Caco-2 (cell line): ENCODE measurements at regions of chr4 and their contacts with region 1.

Region 1: GRCh38 chr4:69896530-69897116 is 34.2 kb upstream of the CSN1S1 start:
- DNase-seq: no peak
- H3K4me3 ChIP-seq: no peak overlapping the region
- H3K4me3 Mint-ChIP-seq: no peak overlapping the region
- H3K27ac Mint-ChIP-seq: no peak overlapping the region
- H3K4me1 ChIP-seq: peaks cover 14% of the 10 kb centered on the region
- H3K4me1 Mint-ChIP-seq: peaks cover 13% of the 10 kb centered on the region
- H3K27me3 ChIP-seq: no peaks in the 10 kb centered on the region
- H3K27me3 Mint-ChIP-seq: no peaks in the 10 kb centered on the region
- CTCF ChIP-seq: peak; percentile 41 to 50

Region 2: DNA sequence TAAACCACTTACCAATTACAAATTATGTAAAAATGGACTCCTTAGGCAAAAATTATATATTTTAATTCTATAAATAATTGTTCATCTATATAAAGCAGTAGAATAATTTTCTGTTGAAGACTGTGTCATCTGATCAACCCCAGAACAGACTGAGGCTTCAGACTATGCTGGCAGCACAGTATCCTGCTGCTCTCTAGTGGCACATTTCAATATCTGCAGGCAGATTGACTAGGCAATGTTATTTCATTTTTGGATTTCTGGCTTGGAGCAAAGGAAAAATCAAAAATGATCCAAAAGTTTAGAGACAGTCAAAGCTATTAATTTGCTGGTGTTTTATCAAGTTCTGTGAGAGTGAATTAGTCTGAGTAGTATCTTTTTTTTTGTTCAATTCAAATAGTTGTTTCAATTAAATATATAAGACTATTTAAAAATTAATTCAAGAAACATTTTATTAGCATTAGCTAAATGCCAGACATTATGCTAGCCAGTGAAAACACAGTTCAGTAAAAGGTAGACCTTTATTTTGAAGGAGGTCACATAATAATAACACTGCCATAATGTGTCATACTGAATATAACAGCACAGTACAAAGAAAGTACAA is 15.3 kb before region 1 on chr4:
- CTCF ChIA-PET with region 1: no interaction called
- POLR2A ChIA-PET with region 1: no interaction called
- intact Hi-C with region 1: no loop called
- DNase-seq: peak; percentile 41 to 48
- H3K4me3 ChIP-seq: no peak overlapping the region
- H3K4me3 Mint-ChIP-seq: no peak overlapping the region
- H3K27ac Mint-ChIP-seq: no peak overlapping the region
- H3K4me1 ChIP-seq: no peaks in the 10 kb centered on the region; the same call in 1 of the 2 replicates
- H3K4me1 Mint-ChIP-seq: peaks cover 13% of the 10 kb centered on the region
- H3K27me3 ChIP-seq: no peaks in the 10 kb centered on the region
- H3K27me3 Mint-ChIP-seq: no peaks in the 10 kb centered on the region
- CTCF ChIP-seq: peak; percentile 75 to 80

Region 3: GRCh38 chr4:69934150-69934549 is 37.5 kb after region 1 on chr4:
- CTCF ChIA-PET with region 1: no interaction called
- POLR2A ChIA-PET with region 1: no interaction called
- intact Hi-C with region 1: no loop called
- DNase-seq: no peak
- H3K4me3 ChIP-seq: no peak overlapping the region
- H3K4me3 Mint-ChIP-seq: no peak overlapping the region
- H3K27ac Mint-ChIP-seq: no peak overlapping the region
- H3K4me1 ChIP-seq: no peaks in the 10 kb centered on the region
- H3K4me1 Mint-ChIP-seq: no peaks in the 10 kb centered on the region
- H3K27me3 ChIP-seq: no peaks in the 10 kb centered on the region
- H3K27me3 Mint-ChIP-seq: no peaks in the 10 kb centered on the region
- CTCF ChIP-seq: no peak

Region 4: DNA sequence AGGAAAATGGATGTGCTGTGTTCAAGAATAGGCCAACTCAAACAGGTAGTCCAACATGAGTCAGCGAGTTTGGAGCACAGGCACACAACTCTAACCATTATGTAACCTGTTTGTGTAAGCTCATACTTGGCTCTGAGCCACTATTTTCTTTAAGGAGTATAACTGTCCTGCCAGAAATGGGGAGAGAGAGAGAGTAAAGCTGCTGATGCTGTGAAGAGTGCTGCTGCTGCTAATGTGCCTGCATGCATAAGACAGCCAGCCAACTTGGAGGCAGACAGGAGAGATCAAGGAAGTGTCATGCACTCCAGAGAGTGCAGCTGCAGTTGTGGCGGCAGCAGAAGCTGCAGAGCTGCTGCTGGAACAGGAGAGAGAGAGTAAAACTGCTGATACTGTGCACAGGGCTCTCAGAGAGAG is 87.4 kb after region 1 on chr4:
- CTCF ChIA-PET with region 1: no interaction called
- POLR2A ChIA-PET with region 1: no interaction called
- intact Hi-C with region 1: loop called (anchors 5 kb)
- DNase-seq: peak; percentile 33 to 59
- H3K4me3 ChIP-seq: no peak overlapping the region
- H3K4me3 Mint-ChIP-seq: peak overlapping the region; percentile 28
- H3K27ac Mint-ChIP-seq: peak overlapping the region; percentile 54
- H3K4me1 ChIP-seq: peaks cover 25% of the 10 kb centered on the region
- H3K4me1 Mint-ChIP-seq: peaks cover 20% of the 10 kb centered on the region
- H3K27me3 ChIP-seq: no peaks in the 10 kb centered on the region
- H3K27me3 Mint-ChIP-seq: no peaks in the 10 kb centered on the region
- CTCF ChIP-seq: no peak

Region 5: GRCh38 chr4:70269674-70270073 is 373.1 kb after region 1 on chr4:
- CTCF ChIA-PET with region 1: interaction called, 3 read pairs
- POLR2A ChIA-PET with region 1: no interaction called
- intact Hi-C with region 1: loop called (anchors 1 kb)
- DNase-seq: peak in 1 of 2 experiments; percentile 1
- H3K4me3 ChIP-seq: no peak overlapping the region
- H3K4me3 Mint-ChIP-seq: no peak overlapping the region
- H3K27ac Mint-ChIP-seq: no peak overlapping the region
- H3K4me1 ChIP-seq: no peaks in the 10 kb centered on the region
- H3K4me1 Mint-ChIP-seq: no peaks in the 10 kb centered on the region
- H3K27me3 ChIP-seq: no peaks in the 10 kb centered on the region
- H3K27me3 Mint-ChIP-seq: no peaks in the 10 kb centered on the region
- CTCF ChIP-seq: peak in 1 of 2 experiments; percentile 15

Region 6: DNA sequence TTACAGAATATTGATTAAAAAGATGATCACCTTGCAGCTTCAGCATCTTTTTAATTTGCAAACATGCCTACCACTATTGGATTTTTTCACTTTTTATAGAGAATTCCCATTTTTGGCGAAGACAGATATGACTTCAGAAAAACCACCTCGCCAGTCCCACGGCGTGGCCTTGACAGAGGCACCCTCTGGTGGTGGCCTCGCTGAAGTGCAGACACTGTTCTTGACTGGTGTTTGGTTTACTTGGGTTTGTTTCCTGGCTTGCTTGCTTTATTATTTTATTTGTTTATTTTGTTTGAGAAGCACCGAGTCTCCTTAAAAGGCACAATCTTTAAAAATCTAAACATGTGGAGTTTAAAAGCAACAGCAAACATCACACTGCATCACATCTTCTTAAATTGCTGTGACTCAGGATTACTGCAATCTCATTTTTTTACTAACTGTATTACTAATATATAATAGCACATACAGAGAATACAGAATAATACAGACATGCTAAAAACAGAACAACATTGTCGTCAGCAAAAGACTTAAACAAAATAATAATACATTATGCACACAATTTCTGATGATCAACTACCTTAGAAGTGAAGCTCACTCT is 608.6 kb after region 1 on chr4:
- CTCF ChIA-PET with region 1: no interaction called
- POLR2A ChIA-PET with region 1: no interaction called
- intact Hi-C with region 1: loop called (anchors 1 kb)
- DNase-seq: peak; percentile 43 to 71
- H3K4me3 ChIP-seq: no peak overlapping the region
- H3K4me3 Mint-ChIP-seq: no peak overlapping the region
- H3K27ac Mint-ChIP-seq: no peak overlapping the region
- H3K4me1 ChIP-seq: no peaks in the 10 kb centered on the region
- H3K4me1 Mint-ChIP-seq: no peaks in the 10 kb centered on the region
- H3K27me3 ChIP-seq: no peaks in the 10 kb centered on the region
- H3K27me3 Mint-ChIP-seq: no peaks in the 10 kb centered on the region
- CTCF ChIP-seq: peak; percentile 86 to 94